T-cell (primary cell): ENCODE measurements at regions of chr10 and their contacts with region 1.

Region 1: GRCh38 chr10:12971001-12971788 is 30.3 kb downstream of the CCDC3 start:
- DNase-seq: no peak
- ATAC-seq: no peak
- H3K4me3 ChIP-seq: no peak overlapping the region
- H3K4me3 Mint-ChIP-seq: no peak overlapping the region
- H3K27ac ChIP-seq: no peak overlapping the region
- H3K27ac Mint-ChIP-seq: no peak overlapping the region
- H3K4me1 ChIP-seq: no peaks in the 10 kb centered on the region
- H3K4me1 Mint-ChIP-seq: no peaks in the 10 kb centered on the region
- H3K27me3 ChIP-seq: peaks cover 0 to 16% of the 10 kb centered on the region in 2 experiments
- H3K27me3 Mint-ChIP-seq: peaks cover 12 to 17% of the 10 kb centered on the region in 2 donors

Region 2: DNA sequence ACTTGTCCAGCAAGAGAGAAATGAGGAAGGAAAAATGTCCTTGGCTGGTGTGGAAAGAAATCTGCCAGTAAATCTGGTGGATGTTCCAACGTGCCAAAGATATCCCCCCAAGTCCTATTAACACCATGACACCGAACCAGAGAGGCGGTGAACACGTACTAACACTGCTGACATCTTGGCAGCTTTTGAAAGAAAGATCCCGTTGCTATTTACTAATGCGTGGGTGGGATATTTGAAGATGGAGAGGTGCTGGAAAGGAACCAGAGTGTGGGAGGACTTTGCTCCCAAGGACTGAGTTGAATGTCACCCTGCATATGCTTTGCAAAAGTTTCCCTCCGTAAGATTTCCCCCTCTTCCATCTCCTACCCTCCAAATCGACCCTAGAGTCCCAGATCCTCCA is 22.4 kb after region 1 on chr10:
- CTCF ChIA-PET with region 1: no interaction called
- POLR2A ChIA-PET with region 1: no interaction called
- DNase-seq: no peak
- ATAC-seq: no peak
- H3K4me3 ChIP-seq: no peak overlapping the region
- H3K4me3 Mint-ChIP-seq: no peak overlapping the region
- H3K27ac ChIP-seq: no peak overlapping the region
- H3K27ac Mint-ChIP-seq: no peak overlapping the region
- H3K4me1 ChIP-seq: no peaks in the 10 kb centered on the region
- H3K4me1 Mint-ChIP-seq: no peaks in the 10 kb centered on the region
- H3K27me3 ChIP-seq: peaks cover 0 to 8% of the 10 kb centered on the region in 2 experiments
- H3K27me3 Mint-ChIP-seq: peaks cover 15 to 39% of the 10 kb centered on the region in 2 donors

Region 3: GRCh38 chr10:13383399-13383761 is 412.2 kb after region 1 on chr10:
- CTCF ChIA-PET with region 1: no interaction called
- POLR2A ChIA-PET with region 1: interaction called in 1 of 2 experiments, 13 read pairs
- DNase-seq: no peak
- ATAC-seq: no peak
- H3K4me3 ChIP-seq: peak overlapping the region in 1 of 2 donors; percentile 3
- H3K4me3 Mint-ChIP-seq: peak overlapping the region; percentile 22 to 64 (median 43)
- H3K27ac ChIP-seq: no peak overlapping the region
- H3K27ac Mint-ChIP-seq: peak overlapping the region in 1 of 2 donors; percentile 23
- H3K4me1 ChIP-seq: peaks cover 0 to 11% of the 10 kb centered on the region in 2 experiments
- H3K4me1 Mint-ChIP-seq: peaks cover 11% of the 10 kb centered on the region in 3 donors
- H3K27me3 ChIP-seq: peaks cover 4 to 49% of the 10 kb centered on the region in 2 experiments
- H3K27me3 Mint-ChIP-seq: peaks cover 49 to 59% of the 10 kb centered on the region in 2 donors

Region 4: GRCh38 chr10:13597909-13598308 is 626.7 kb after region 1 on chr10:
- CTCF ChIA-PET with region 1: no interaction called
- POLR2A ChIA-PET with region 1: no interaction called
- DNase-seq: no peak
- ATAC-seq: no peak
- H3K4me3 ChIP-seq: no peak overlapping the region
- H3K4me3 Mint-ChIP-seq: no peak overlapping the region
- H3K27ac ChIP-seq: no peak overlapping the region
- H3K27ac Mint-ChIP-seq: no peak overlapping the region
- H3K4me1 ChIP-seq: no peaks in the 10 kb centered on the region
- H3K4me1 Mint-ChIP-seq: peaks cover 20 to 31% (median 22%) of the 10 kb centered on the region in 3 donors
- H3K27me3 ChIP-seq: no peaks in the 10 kb centered on the region
- H3K27me3 Mint-ChIP-seq: no peaks in the 10 kb centered on the region